ENCODE measurements at regions of chr3 and their contacts with region 1.

Region 1: DNA sequence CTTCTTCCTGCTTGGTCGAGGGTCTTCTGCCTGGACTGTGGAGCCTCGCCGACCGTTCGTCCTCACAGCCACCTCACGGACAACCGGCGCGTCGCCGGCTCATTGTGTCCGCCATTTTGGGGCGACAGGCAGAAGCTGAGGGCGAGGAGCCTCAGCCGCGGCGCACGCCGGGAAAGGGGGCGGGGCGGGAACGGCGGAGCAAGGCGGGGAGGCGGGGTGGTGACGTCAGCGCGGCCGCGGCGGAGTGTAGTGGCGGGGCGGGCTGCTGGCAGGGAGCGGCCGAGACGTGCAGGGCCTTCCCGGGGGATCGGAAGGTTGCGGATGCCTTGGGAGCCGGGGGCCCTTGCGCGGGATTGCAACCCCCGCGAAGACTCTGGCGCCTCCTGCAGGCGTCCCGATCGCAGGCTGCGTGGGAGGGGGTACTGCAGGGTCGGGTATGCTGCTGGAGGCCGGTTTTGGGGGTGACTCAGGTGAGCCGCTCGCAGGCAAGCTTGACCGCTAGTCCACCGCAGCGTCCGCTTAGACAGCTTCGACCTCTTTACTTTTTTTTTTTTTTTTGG is at the start of gene WDR82:
- DNase-seq: peak; percentile 93 to 96 (median 95)
- H3K4me3 ChIP-seq: peak within 1 kb of the TSS; percentile 83 to 97 (median 94)
- H3K27ac ChIP-seq: peak within 1 kb of the TSS; percentile 86 to 90
- H3K4me1 ChIP-seq: peaks cover 30 to 62% (median 47%) of the 10 kb centered on the region in 4 experiments
- H3K27me3 ChIP-seq: no peaks in the 10 kb centered on the region

Region 2: GRCh38 chr3:52154117-52155094 is 124.2 kb before region 1 on chr3 and contains the start of gene POC1A:
- CTCF ChIA-PET with region 1: no interaction called
- POLR2A ChIA-PET with region 1: interaction called, 11 read pairs
- DNase-seq: peak; percentile 94 to 98 (median 97)
- H3K4me3 ChIP-seq: peak within 1 kb of the TSS; percentile 72 to 94 (median 81)
- H3K27ac ChIP-seq: peak within 1 kb of the TSS; percentile 40 to 78
- H3K4me1 ChIP-seq: peaks cover 0 to 16% (median 15%) of the 10 kb centered on the region in 4 experiments
- H3K27me3 ChIP-seq: no peaks in the 10 kb centered on the region

Region 3: GRCh38 chr3:52238761-52239701 is 39.6 kb before region 1 on chr3 and contains the start of gene TWF2:
- CTCF ChIA-PET with region 1: interaction called, 74 read pairs
- POLR2A ChIA-PET with region 1: interaction called, 4 read pairs
- DNase-seq: peak; percentile 74 to 86 (median 85)
- H3K4me3 ChIP-seq: peak within 1 kb of the TSS; percentile 66 to 94 (median 84)
- H3K27ac ChIP-seq: peak within 1 kb of the TSS; percentile 64 to 83
- H3K4me1 ChIP-seq: peaks cover 2 to 48% (median 39%) of the 10 kb centered on the region in 4 experiments
- H3K27me3 ChIP-seq: no peaks in the 10 kb centered on the region

Region 4: DNA sequence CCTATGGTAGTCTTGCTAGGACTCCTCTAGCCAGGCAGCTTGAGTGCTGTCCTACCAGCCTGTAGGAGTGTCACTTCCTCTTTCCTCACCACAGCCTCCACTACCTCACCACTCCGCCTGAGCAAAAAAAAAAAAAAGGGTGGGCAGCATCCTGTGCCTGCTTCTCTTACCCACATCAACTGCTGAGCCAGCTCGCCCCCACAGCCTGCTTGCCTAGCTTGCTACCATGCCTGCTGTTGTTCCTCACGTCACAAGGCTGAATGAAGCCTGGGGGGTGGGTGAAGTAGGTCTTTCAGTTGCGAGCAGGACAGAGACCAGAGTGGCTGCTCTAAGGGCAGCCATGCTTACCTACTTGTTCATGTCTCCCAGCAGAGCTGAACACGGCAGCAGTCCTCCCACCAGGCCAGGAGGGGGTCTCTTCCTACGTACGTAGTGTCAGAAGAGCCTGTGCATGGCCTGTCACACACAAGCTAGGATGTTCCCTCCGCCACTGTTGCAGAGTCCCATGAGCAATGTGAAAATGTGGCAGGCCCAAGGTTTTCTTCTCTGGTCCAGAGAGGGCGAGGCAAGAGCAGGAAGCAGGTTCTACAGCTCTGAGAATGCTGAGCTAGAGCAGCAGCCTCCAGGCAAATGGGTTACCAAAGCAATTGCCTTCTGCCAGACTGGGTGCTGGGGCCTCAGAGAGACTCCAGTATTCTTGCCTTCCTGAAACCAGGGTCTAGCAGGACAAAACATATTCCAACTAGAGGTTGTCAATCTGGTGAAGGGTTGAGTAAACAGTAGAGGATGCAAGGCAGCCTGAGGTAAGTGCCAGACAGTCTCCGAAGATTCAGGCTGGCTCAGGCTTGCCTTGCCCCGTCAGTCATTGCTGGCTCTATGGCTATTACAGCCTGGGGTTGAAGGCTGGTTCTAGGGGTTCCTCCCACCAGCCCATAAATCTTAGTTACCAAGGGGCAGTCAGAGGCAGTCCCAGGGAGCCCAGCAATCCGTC is 25.0 kb before region 1 on chr3:
- CTCF ChIA-PET with region 1: interaction called, 11 read pairs
- POLR2A ChIA-PET with region 1: interaction called, 5 read pairs
- DNase-seq: peak; percentile 94 to 99 (median 98)
- H3K4me3 ChIP-seq: peak overlapping the region in 4 of 7 experiments; percentile 17 to 49 (median 36)
- H3K27ac ChIP-seq: peak overlapping the region; percentile 69 to 78
- H3K4me1 ChIP-seq: peaks cover 7 to 37% (median 23%) of the 10 kb centered on the region in 4 experiments
- H3K27me3 ChIP-seq: no peaks in the 10 kb centered on the region

Region 5: DNA sequence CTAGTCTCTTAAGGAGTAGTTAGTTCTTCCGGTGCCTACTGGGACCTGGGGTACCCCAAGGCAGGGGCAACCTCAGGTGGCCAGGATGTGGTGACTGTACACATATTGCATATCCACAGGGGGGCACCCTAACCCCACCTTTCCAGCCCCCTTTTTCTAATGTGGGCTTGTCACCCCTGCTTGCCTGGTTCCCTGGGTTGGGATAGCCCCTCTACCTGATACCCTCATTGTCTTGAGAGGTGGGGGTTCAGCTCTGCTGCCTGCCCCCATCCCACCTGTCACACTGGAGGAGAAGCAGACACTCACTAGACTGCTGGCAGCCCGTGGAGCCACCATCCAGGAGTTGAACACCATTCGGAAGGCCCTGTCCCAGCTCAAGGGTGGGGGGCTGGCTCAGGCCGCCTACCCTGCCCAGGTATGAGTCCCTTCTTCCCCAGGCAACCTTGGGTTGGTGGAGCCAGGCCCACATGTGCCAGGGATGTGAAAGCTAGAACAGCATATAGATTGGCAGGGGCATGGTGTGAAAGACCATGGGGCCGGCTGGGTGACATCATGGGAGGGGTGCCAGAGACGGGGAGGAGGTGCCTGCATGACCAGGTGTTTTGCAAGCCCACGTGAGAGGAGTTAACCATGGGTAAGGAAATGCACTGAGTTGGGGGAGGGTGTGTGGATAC is 13.1 kb after region 1 on chr3:
- CTCF ChIA-PET with region 1: interaction called, 28 read pairs
- POLR2A ChIA-PET with region 1: interaction called, 15 read pairs
- DNase-seq: peak; percentile 39 to 65 (median 57)
- H3K4me3 ChIP-seq: no peak overlapping the region
- H3K27ac ChIP-seq: no peak overlapping the region
- H3K4me1 ChIP-seq: peaks cover 3 to 33% (median 19%) of the 10 kb centered on the region in 4 experiments
- H3K27me3 ChIP-seq: no peaks in the 10 kb centered on the region

Region 6: DNA sequence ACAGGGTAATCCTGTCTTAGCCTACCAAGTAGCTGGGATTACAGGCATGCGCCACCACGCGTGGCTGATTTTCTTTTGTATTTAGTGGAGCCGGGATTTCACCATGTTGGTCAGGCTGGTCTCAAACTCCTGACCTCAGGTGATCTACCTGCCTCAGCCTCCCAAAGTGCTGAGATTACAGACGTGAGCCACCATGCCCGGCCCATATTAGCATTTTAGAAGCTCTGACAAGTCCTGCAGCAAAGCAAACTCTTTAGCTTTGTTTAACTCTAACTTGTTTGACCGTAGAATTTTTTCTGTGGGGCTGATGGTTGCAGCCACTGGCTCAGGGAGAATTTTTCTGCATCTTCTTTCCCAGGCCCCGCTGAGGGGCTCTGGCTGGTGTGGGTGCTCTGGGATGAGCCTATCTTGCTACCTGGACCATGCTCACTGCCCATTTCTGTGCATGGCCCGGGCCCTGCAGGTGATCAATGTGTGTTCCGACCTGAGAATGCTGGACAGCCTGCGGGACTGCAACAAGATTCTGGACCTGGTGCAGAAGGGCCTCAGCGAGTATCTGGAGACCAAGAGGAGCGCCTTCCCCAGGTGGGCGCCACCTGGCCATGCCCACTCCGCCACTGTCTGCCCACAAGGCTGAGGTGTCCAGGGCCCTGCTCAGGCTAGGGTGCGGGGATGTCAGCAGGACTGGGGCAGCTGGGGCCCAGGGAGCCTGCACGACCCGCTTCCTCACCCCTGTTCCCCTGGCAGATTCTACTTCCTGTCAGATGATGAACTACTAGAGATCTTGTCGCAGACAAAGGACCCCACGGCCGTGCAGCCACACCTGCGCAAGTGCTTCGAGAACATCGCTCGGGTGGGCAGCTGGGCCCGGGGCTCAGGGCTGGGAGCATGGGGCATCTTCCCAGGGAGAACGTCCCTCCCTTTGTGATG is 78.8 kb after region 1 on chr3:
- CTCF ChIA-PET with region 1: no interaction called
- POLR2A ChIA-PET with region 1: no interaction called
- DNase-seq: no peak
- H3K4me3 ChIP-seq: no peak overlapping the region
- H3K27ac ChIP-seq: no peak overlapping the region
- H3K4me1 ChIP-seq: no peaks in the 10 kb centered on the region
- H3K27me3 ChIP-seq: no peaks in the 10 kb centered on the region

Measured in common myeloid progenitor, CD34-positive (primary cell).